SK-N-SH (cell line): ENCODE measurements at regions of chr21 and their contacts with region 1.

Region 1: GRCh38 chr21:33479679-33480480 is at the start of gene TMEM50B:
- DNase-seq: peak; percentile 98
- H3K4me3 ChIP-seq: peak within 1 kb of the TSS; percentile 67 to 80
- H3K27ac ChIP-seq: peak within 1 kb of the TSS; percentile 87 to 90
- H3K4me1 ChIP-seq: peaks cover 0 to 4% of the 10 kb centered on the region in 2 experiments; a peak in 1 of 4 replicates
- H3K27me3 ChIP-seq: no peaks in the 10 kb centered on the region
- CTCF ChIP-seq: peak; percentile 53
- EP300 ChIP-seq: 0 out of 4 replicates have a peak, but pooled peaks of 1 of the 2 experiments have one; percentile 14
- RAD21 ChIP-seq: peak; percentile 43
- polyA plus RNA-seq, gene TMEM50B: 27.3 and 41.3 TPM in 2 replicates

Region 2: DNA sequence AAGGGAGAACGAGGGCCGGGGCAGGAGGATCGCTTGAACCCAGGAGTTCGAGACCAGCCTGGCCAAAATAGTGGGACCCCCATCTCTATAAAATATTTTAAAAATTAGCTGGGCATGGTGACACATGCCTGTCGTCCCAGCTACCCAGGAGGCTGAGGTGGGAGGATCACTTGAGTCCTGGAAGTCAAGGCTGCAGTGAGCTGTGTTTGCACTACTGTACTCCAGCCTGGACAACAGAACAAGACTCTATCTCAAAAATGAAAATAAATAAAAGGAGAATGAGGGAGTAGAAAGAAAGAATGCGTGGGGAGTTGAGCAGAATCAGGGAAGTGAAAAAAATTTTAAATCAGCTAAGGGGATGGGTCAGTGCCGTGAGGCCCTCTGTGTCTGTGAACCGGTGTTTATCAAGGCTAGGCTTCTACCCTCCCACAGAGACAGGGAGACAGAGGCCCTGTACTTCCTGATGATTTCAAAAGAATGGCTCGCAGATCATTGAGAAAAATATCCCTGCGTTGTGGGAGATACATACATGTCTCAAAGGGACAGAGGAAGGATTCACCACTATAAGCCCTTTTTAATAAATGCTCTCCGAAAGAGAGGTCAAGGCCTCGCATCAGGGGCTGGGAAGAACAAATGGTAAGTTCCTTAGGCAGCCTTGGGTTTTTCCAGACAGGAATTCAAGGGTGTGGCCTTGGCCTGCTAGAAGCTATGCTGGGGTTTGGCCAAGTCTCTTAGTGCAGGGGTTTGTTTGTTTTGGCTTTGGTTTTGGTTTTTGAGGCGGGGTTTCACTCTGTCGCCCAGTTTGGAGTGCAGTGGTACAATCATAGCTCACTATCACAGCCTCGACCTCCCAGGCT is 193.1 kb before region 1 on chr21:
- CTCF ChIA-PET with region 1: no interaction called
- POLR2A ChIA-PET with region 1: no interaction called
- DNase-seq: no peak
- H3K4me3 ChIP-seq: no peak overlapping the region
- H3K27ac ChIP-seq: no peak overlapping the region
- H3K4me1 ChIP-seq: no peaks in the 10 kb centered on the region
- H3K27me3 ChIP-seq: no peaks in the 10 kb centered on the region
- CTCF ChIP-seq: no peak
- EP300 ChIP-seq: no peak
- RAD21 ChIP-seq: no peak

Region 3: GRCh38 chr21:33491373-33492102 is 11.7 kb after region 1 on chr21 and contains the start of gene DNAJC28:
- CTCF ChIA-PET with region 1: interaction called, 15 read pairs
- POLR2A ChIA-PET with region 1: interaction called, 56 read pairs
- DNase-seq: peak; percentile 96
- H3K4me3 ChIP-seq: peak within 1 kb of the TSS; percentile 67 to 81
- H3K27ac ChIP-seq: peak within 1 kb of the TSS; percentile 26 to 83; a peak in 2 of 4 replicates
- H3K4me1 ChIP-seq: no peaks in the 10 kb centered on the region
- H3K27me3 ChIP-seq: no peaks in the 10 kb centered on the region
- CTCF ChIP-seq: no peak
- EP300 ChIP-seq: no peak
- RAD21 ChIP-seq: no peak
- polyA plus RNA-seq, gene DNAJC28: 0.58 and 0.88 TPM in 2 replicates